Activated CD4-positive, alpha-beta T cell treated with anti-CD3 and anti-CD28 coated beads for 36 hours (primary cell): ENCODE measurements at regions of chr6 and their contacts with region 1.

Region 1: GRCh38 chr6:34189806-34190503 is 44.1 kb upstream of the GRM4 start:
- DNase-seq: peak; percentile 78
- ATAC-seq: peak; percentile 81
- H3K4me3 Mint-ChIP-seq: no peak overlapping the region
- H3K27ac Mint-ChIP-seq: no peak overlapping the region
- H3K4me1 Mint-ChIP-seq: peaks cover 11% of the 10 kb centered on the region
- H3K27me3 Mint-ChIP-seq: no peaks in the 10 kb centered on the region

Region 2: GRCh38 chr6:33904050-33904746 is 285.8 kb before region 1 on chr6:
- CTCF ChIA-PET with region 1: no interaction called
- POLR2A ChIA-PET with region 1: no interaction called
- intact Hi-C with region 1: no loop called
- DNase-seq: peak; percentile 78
- ATAC-seq: peak; percentile 92
- H3K4me3 Mint-ChIP-seq: no peak overlapping the region
- H3K27ac Mint-ChIP-seq: peak overlapping the region; percentile 65
- H3K4me1 Mint-ChIP-seq: peaks cover 53% of the 10 kb centered on the region
- H3K27me3 Mint-ChIP-seq: no peaks in the 10 kb centered on the region

Region 3: GRCh38 chr6:34350137-34350933 is 160.4 kb after region 1 on chr6:
- CTCF ChIA-PET with region 1: no interaction called
- POLR2A ChIA-PET with region 1: interaction called, 10 read pairs
- intact Hi-C with region 1: no loop called
- DNase-seq: no peak
- ATAC-seq: no peak
- H3K4me3 Mint-ChIP-seq: no peak overlapping the region
- H3K27ac Mint-ChIP-seq: no peak overlapping the region
- H3K4me1 Mint-ChIP-seq: peaks cover 6% of the 10 kb centered on the region
- H3K27me3 Mint-ChIP-seq: no peaks in the 10 kb centered on the region

Region 4: GRCh38 chr6:34436803-34437643 is 247.1 kb after region 1 on chr6:
- CTCF ChIA-PET with region 1: no interaction called
- POLR2A ChIA-PET with region 1: no interaction called
- intact Hi-C with region 1: no loop called
- DNase-seq: no peak
- ATAC-seq: no peak
- H3K4me3 Mint-ChIP-seq: no peak overlapping the region
- H3K27ac Mint-ChIP-seq: no peak overlapping the region
- H3K4me1 Mint-ChIP-seq: no peaks in the 10 kb centered on the region
- H3K27me3 Mint-ChIP-seq: no peaks in the 10 kb centered on the region